ENCODE measurements at regions of chr17 and their contacts with region 1.

Region 1: DNA sequence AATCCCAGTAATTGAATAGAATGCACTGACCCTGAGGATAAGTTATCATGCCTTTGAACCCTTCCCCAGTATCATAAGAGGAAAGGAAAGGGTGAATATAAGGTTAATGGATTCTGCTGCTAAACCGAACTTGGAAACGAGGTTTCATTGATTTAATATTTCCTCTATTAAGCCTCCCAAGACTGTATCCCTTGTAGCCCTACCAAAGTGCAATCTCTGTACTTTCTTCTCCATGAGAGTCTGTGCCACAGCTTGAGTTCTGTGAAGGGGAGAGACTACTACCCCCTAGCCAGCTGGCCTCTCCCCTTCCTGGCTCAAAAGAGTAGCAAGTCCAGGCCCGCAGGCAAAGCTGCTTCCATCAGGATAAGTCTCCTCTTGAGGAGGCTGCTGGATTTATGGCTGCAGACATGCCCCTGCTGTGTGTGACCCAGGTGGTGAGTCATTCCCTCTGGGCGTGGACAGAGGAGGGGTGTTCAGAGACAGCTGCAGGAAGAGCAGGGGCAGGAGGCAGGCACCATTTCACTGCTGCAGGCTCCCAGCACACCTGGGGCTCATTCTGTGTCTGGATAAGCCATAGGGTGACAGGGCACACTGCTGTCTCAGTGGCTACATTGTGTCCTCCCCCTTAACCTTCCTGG is 58.4 kb downstream of the TOM1L2 start:
- DNase-seq: peak; percentile 90
- ATAC-seq: peak; percentile 99
- H3K4me3 ChIP-seq: no peak overlapping the region
- H3K27ac ChIP-seq: peak overlapping the region; percentile 45
- H3K4me1 ChIP-seq: peaks cover 7% of the 10 kb centered on the region
- H3K27me3 ChIP-seq: no peaks in the 10 kb centered on the region
- CTCF ChIP-seq: no peak
- POLR2A ChIP-seq: no peak
- RAD21 ChIP-seq: peak; percentile 23; the same call in 1 of the 2 replicates

Region 2: GRCh38 chr17:17440010-17440843 is 473.6 kb before region 1 on chr17:
- CTCF ChIA-PET with region 1: no interaction called
- POLR2A ChIA-PET with region 1: no interaction called
- dilution Hi-C with region 1: no loop called
- in situ Hi-C with region 1: no loop called
- intact Hi-C with region 1: no loop called
- DNase-seq: peak; percentile 42
- ATAC-seq: no peak
- H3K4me3 ChIP-seq: no peak overlapping the region
- H3K27ac ChIP-seq: no peak overlapping the region
- H3K4me1 ChIP-seq: peaks cover 7% of the 10 kb centered on the region
- H3K27me3 ChIP-seq: no peaks in the 10 kb centered on the region
- CTCF ChIP-seq: peak; percentile 50
- POLR2A ChIP-seq: no peak
- RAD21 ChIP-seq: peak; percentile 56

Region 3: GRCh38 chr17:17900615-17901520 is 12.9 kb before region 1 on chr17:
- CTCF ChIA-PET with region 1: interaction called, 4 read pairs
- POLR2A ChIA-PET with region 1: no interaction called
- dilution Hi-C with region 1: no loop called
- in situ Hi-C with region 1: no loop called
- intact Hi-C with region 1: loop called (anchors 2 kb)
- DNase-seq: peak; percentile 94
- ATAC-seq: peak; percentile 84
- H3K4me3 ChIP-seq: no peak overlapping the region
- H3K27ac ChIP-seq: peak overlapping the region; percentile 42
- H3K4me1 ChIP-seq: peaks cover 12% of the 10 kb centered on the region
- H3K27me3 ChIP-seq: no peaks in the 10 kb centered on the region
- CTCF ChIP-seq: no peak
- POLR2A ChIP-seq: no peak
- RAD21 ChIP-seq: no peak; the same call in 1 of the 2 replicates

Measured in IMR-90 (cell line).